ENCODE measurements at regions of chr11 and their contacts with region 1.

Region 1: DNA sequence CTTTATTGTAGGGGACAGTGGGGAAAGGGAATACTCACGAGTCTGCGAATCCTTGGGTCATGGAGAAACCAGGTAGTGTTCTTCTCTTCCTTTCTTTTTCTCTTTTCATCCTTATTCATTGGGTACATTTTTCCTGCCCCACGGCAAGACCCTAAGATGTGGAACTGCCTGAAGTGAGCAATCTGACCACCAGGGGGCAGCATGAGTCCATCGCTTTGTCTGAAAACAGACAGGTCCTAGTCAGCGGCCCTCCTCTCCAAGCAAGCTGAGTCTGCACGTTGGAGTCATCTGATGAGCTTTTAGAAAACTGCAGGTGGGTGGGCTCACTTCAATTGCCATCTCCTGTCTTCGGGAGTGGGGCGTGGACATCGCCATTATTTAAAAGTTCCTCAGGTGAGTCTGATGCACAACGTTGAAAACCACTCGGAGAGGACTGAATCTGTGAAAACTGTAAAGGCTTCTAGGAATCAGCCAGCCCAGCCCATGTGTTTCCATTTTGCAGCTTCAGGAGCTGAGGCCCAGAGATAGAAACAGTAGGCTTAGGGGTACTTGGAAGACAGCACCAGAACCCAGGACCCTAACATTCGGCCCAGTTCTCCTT is 34.0 kb upstream of the FBXO3 start:
- DNase-seq: peak; percentile 88

Region 2: DNA sequence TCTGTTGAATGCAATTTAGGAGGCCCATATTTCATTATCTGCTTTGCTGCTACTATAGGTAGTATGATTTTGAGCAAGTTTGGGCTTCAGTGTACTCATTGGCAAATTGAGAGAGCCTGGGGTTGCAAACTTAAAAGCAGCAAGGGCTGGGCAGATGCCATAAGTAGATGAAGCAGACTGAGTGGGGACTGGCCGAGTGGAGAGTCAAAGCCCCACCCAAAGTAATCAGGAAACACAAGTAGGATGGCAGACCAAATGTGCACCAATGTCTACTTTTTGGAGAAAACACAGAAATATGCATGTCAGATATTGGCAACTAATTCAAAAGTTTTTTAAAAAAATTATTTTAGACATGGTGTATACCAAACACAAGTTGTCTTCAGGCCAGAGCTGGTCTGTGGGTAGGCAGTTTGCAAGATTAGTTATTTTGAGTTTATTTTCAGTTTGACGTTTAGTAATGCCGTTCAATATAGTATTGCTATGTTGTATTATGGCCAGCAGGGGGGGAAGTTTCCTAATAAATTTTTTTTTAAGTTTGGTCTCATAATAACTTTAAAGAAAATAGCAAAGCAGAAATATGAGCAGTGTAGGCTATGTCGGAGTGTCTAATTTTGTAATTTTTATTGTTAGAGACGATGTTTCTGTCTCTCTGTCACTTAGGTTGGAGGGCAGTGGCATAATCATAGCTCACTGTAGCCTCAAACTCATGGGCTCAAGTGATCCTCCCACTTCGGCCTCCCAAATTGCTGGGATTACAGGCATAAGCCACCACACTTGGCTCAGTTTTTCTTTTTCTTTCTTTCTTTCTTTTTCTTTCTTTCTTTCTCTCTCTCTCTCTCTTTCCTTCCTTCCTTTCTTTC is 446.0 kb before region 1 on chr11:
- intact Hi-C with region 1: loop called (anchors 10 kb)
- DNase-seq: no peak

Region 3: GRCh38 chr11:33633241-33633901 is 175.0 kb before region 1 on chr11:
- intact Hi-C with region 1: no loop called
- DNase-seq: no peak

Region 4: DNA sequence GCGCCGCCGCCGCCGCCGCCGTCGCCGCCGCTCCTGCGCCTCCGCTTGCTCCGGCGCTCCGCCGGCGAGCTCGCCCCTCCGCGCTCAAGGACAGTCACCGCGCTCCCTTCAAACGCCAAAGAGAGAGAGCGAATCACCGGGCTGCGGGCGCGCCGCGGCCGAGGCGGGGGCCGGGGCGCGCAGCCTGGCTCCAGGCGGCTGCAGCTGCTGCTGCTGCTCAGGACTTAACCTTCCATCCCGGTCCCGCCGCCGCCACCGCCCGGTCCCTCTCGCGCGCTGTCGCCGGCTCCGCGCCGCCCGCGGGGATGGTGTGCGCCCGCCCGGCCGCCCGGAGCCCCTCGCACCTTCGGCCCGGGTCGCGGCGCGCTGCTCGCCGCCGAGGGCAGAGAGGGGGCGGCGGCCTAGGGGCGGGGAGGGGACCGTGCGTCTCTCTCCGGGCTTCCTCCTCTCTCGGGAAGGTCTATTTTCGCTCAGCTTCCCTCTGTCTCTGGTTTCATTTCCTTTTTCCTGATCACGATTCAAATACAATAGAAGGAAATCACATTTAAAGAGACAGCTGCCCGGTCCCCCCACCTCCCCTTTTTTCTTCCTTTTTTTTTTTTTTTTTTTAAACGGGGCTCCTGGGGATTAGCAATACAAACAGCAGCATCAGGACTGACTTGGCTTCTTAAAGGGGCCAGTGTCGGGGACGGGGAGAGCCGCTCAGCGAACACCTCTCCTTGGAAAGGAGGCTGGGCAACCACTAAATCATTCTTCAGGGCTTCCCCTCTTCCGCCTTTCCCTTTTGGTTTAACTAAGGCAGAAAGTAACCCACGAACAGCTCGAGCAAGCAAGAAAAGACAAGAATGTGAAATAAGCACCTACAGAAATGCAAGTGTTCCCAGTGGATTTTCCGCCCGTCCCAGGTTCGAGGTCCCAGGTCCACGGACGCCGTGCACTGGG is 61.4 kb after region 1 on chr11:
- intact Hi-C with region 1: no loop called
- DNase-seq: peak; percentile 83

Region 5: GRCh38 chr11:33987975-33988580 is 179.8 kb after region 1 on chr11:
- intact Hi-C with region 1: loop called (anchors 5 kb)
- DNase-seq: peak; percentile 78

Measured in cardiac septum (tissue), 1 donor.